Caco-2 (cell line): ENCODE measurements at regions of chr3 and their contacts with region 1.

Region 1: DNA sequence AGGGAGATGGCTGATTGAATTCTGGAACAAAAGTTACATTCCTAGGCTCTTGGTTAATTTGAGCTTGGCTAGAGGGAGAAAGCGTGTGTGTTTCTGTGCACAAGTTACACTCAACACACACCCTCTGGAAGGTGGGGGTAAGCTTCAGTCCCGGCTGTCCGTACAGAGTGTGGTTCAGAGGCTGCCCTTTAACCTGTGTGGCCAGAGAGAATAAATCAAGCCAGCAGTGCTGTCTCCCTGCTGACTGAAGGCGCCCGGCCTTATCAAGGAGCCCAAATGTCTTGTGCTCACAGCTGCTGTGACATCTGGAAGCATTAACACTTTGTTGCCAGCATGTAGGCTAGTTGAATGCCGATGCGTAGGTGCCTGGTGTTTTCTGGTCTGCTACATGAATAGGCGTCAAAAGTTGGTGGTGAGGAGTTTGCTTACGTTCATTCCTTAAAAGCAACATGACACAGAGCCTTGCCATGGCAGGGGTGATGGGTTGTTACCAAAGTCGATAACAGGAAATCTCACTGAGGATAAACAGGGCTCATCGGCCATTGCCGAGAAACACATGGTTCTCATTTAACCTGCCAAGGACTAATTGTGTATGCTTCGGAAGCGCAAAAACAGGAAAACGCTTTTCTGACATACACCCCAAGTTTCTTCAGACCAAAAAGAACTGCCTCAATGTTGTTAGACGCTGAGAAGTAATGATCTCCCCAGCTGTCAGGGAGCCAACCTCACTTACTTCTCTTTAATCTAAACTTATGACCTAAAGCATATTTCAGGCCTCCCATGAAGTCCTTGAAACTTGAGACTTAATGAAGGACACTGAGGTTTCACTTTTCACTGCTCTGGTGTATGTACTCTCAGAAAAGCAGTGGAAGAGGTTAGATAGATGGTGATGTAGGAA is 95.8 kb upstream of the CTDSPL start:
- DNase-seq: peak; percentile 57 to 80
- H3K4me3 ChIP-seq: no peak overlapping the region
- H3K4me3 Mint-ChIP-seq: peak overlapping the region; percentile 2
- H3K27ac Mint-ChIP-seq: peak overlapping the region; percentile 11
- H3K4me1 ChIP-seq: peaks cover 36% of the 10 kb centered on the region
- H3K4me1 Mint-ChIP-seq: peaks cover 49% of the 10 kb centered on the region
- H3K27me3 ChIP-seq: no peaks in the 10 kb centered on the region
- H3K27me3 Mint-ChIP-seq: no peaks in the 10 kb centered on the region
- CTCF ChIP-seq: no peak

Region 2: DNA sequence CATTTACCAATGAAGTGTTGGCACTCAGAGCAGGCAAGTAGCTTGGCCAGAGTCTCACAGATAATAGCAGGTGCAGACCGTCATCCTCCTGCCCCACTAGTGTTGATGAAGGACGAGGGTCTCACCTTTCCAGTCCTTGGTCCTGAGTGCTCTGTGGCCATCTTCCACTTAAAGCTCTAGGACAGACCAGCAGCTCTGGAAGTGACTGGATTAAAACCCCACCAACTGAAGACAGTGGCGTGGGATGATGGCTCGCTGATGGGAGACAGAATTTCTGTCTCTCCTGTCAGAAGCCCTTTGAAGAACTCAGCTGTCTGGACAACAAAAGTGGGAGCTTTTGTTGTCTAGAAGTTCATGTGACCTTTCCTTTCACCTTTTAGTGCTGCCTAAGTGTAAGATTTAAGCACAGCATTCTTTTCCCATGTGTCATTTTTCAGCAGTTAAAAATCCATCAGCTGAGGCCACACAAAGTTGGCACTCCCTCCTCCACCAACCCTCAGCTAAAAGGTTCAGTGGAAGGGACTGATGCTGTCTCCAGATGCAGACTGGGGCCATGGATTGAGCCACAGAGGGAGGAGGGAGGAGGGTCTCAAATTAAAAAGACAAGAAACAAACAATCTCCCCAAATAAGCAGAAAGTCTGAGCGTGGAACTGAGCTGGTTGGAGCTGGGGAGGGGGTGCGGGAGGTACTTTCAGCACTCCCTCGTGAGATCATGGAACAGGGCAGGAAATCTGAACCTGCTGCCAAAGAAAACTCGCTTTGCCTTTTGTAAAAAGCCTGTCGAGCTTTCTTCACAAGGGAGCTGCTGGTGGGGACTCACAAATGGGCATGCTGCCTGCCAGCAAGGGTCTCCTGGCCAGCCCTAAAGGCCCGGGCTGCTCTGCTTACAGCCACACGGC is 52.7 kb before region 1 on chr3:
- CTCF ChIA-PET with region 1: no interaction called
- POLR2A ChIA-PET with region 1: no interaction called
- intact Hi-C with region 1: loop called (anchors 2 kb)
- DNase-seq: peak in 1 of 2 experiments; percentile 30
- H3K4me3 ChIP-seq: no peak overlapping the region
- H3K4me3 Mint-ChIP-seq: no peak overlapping the region
- H3K27ac Mint-ChIP-seq: peak overlapping the region; percentile 80
- H3K4me1 ChIP-seq: peaks cover 19% of the 10 kb centered on the region
- H3K4me1 Mint-ChIP-seq: no peaks in the 10 kb centered on the region
- H3K27me3 ChIP-seq: no peaks in the 10 kb centered on the region
- H3K27me3 Mint-ChIP-seq: no peaks in the 10 kb centered on the region
- CTCF ChIP-seq: no peak

Region 3: GRCh38 chr3:37814547-37814946 is 48.7 kb after region 1 on chr3:
- CTCF ChIA-PET with region 1: no interaction called
- POLR2A ChIA-PET with region 1: no interaction called
- intact Hi-C with region 1: no loop called
- DNase-seq: no peak
- H3K4me3 ChIP-seq: no peak overlapping the region
- H3K4me3 Mint-ChIP-seq: no peak overlapping the region
- H3K27ac Mint-ChIP-seq: no peak overlapping the region
- H3K4me1 ChIP-seq: peaks cover 31% of the 10 kb centered on the region
- H3K4me1 Mint-ChIP-seq: peaks cover 7% of the 10 kb centered on the region
- H3K27me3 ChIP-seq: no peaks in the 10 kb centered on the region
- H3K27me3 Mint-ChIP-seq: no peaks in the 10 kb centered on the region
- CTCF ChIP-seq: no peak